Left cardiac atrium (tissue), 4 donors: ENCODE measurements at regions of chr19 and their contacts with region 1.

Region 1: GRCh38 chr19:39319892-39320248 is 793 bp downstream of the LRFN1 start:
- DNase-seq: no peak
- ATAC-seq: no peak

Region 2: GRCh38 chr19:39110263-39110967 is 209.5 kb before region 1 on chr19:
- intact Hi-C with region 1: loop called in 1 of 2 experiments (anchors 5 kb)
- DNase-seq: peak; percentile 57
- ATAC-seq: peak; percentile 38 to 65

Region 3: DNA sequence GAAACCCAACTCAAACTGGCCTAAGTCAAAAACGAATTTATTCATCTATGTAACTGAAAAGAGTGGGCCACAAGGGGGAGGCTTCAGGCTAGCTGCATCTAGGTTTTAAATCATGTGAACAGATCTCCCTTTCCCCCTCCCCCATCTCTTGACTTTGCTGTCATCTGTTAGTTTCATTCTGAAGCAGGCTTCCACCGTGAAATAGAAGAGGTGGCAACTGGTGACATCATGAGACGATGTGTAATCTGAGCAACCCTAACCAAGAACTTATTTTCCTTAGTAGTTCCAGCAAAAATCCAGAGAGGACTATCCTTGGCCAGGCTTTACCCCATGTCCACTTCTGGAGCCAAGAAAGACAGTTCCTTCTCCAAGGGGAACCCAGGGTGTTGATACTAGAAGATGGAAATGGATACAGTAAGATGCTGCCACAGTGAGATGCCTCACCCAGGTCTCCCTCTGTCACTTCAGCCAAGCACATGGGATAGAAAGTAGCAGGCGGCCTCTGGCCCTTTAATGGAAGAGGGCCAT is 31.7 kb after region 1 on chr19:
- intact Hi-C with region 1: no loop called
- DNase-seq: no peak
- ATAC-seq: peak; percentile 10 to 30

Region 4: GRCh38 chr19:39372047-39372802 is 52.4 kb after region 1 on chr19:
- intact Hi-C with region 1: no loop called
- DNase-seq: peak; percentile 87
- ATAC-seq: peak; percentile 93 to 97